GM10248 (cell line): ENCODE measurements at regions of chr20 and their contacts with region 1.

Region 1: GRCh38 chr20:63785691-63786131 is 45.4 kb downstream of the ZBTB46 start:
- DNase-seq: no peak
- CTCF ChIP-seq: no peak

Region 2: GRCh38 chr20:63657937-63658748 is 127.6 kb before region 1 on chr20 and contains the start of gene RTEL1:
- CTCF ChIA-PET with region 1: no interaction called
- POLR2A ChIA-PET with region 1: no interaction called
- DNase-seq: peak; percentile 96
- CTCF ChIP-seq: no peak

Region 3: GRCh38 chr20:63775096-63775978 is 10.4 kb before region 1 on chr20:
- CTCF ChIA-PET with region 1: interaction called, 23 read pairs
- POLR2A ChIA-PET with region 1: no interaction called
- DNase-seq: no peak
- CTCF ChIP-seq: peak; percentile 22

Region 4: GRCh38 chr20:63802469-63803240 is 16.9 kb after region 1 on chr20:
- CTCF ChIA-PET with region 1: interaction called, 22 read pairs
- POLR2A ChIA-PET with region 1: no interaction called
- DNase-seq: no peak
- CTCF ChIP-seq: no peak

Region 5: DNA sequence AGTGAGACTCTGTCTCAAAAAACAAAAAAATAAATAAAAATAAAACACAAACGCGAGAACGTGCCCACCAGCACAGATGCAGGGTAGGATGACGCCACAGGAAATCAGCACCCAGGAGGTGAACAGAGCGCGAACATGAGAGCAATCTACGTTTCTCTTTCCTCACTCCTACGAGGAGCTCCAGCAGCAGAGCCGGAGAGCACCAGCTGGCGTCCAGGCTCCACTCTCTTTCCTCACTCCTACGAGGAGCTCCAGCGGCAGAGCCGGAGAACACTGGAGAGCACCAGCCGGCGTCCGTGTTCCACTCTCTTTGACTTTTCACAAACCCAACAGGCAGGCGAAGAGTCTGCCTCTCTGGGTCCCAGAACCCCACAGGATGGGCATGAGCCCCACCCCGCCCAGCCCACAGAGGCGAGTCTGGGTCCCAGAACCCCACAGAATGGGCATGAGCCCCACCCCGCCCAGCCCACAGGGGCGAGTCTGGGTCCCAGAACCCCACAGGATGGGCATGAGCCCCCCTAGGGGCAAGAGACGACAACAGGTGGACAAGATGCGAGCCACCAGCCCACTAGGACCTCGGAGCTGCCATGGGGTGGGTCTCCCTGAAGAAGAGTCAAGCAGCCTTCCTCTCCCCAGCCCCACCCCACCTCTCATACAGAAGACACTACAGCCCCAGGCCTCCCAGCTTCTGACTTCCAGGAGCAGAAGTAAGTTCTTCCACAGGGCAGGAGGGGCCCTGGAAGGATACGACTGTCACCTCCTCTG is 25.2 kb after region 1 on chr20:
- CTCF ChIA-PET with region 1: interaction called, 10 read pairs
- POLR2A ChIA-PET with region 1: no interaction called
- DNase-seq: no peak
- CTCF ChIP-seq: no peak

Region 6: GRCh38 chr20:63864847-63865640 is 79.3 kb after region 1 on chr20 and contains the start of gene TPD52L2:
- CTCF ChIA-PET with region 1: interaction called, 12 read pairs
- POLR2A ChIA-PET with region 1: no interaction called
- DNase-seq: peak; percentile 97
- CTCF ChIP-seq: no peak